PC-3 (cell line): ENCODE measurements at regions of chrX and their contacts with region 1.

Region 1: GRCh38 chrX:84205276-84205675 is 17.3 kb upstream of the RPS6KA6 start:
- DNase-seq: no peak
- ATAC-seq: no peak
- H3K4me3 ChIP-seq: no peak overlapping the region
- H3K27ac ChIP-seq: no peak overlapping the region
- H3K4me1 ChIP-seq: no peaks in the 10 kb centered on the region
- H3K27me3 ChIP-seq: no peaks in the 10 kb centered on the region
- CTCF ChIP-seq: no peak

Region 2: DNA sequence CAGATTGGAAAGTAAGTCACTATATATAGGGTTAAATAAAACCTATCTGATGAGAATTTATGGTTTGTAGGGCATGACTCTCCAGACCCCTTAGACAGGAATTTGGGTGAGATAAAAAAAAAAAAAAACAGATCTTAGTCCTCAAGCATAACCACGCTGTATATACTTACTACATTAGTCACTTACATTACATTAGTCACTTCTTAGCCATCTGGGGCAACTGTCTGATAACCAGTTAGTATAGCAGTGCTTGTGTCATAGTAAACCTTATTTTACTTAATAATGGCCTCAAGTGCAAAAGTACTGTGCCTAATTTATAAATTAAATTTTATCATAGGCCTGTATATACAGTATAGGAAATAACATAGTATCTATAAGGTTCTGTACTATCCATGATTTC is 43.0 kb after region 1 on chrX:
- CTCF ChIA-PET with region 1: no interaction called
- POLR2A ChIA-PET with region 1: no interaction called
- intact Hi-C with region 1: no loop called
- DNase-seq: peak; percentile 52
- ATAC-seq: peak; percentile 93
- H3K4me3 ChIP-seq: no peak overlapping the region
- H3K27ac ChIP-seq: no peak overlapping the region
- H3K4me1 ChIP-seq: peaks cover 4% of the 10 kb centered on the region; the same call in 1 of the 2 replicates
- H3K27me3 ChIP-seq: no peaks in the 10 kb centered on the region
- CTCF ChIP-seq: no peak

Region 3: GRCh38 chrX:84339507-84340364 is 134.5 kb after region 1 on chrX:
- CTCF ChIA-PET with region 1: no interaction called
- POLR2A ChIA-PET with region 1: no interaction called
- intact Hi-C with region 1: loop called (anchors 10 kb)
- DNase-seq: peak; percentile 54
- ATAC-seq: peak; percentile 31; the same call in 1 of the 2 replicates
- H3K4me3 ChIP-seq: no peak overlapping the region
- H3K27ac ChIP-seq: no peak overlapping the region
- H3K4me1 ChIP-seq: no peaks in the 10 kb centered on the region
- H3K27me3 ChIP-seq: no peaks in the 10 kb centered on the region
- CTCF ChIP-seq: peak; percentile 72